ENCODE measurements at regions of chr16 and their contacts with region 1.

Region 1: GRCh38 chr16:14285513-14286385 is 214.6 kb downstream of the MRTFB start:
- DNase-seq: peak; percentile 95
- CTCF ChIP-seq: no peak

Region 2: DNA sequence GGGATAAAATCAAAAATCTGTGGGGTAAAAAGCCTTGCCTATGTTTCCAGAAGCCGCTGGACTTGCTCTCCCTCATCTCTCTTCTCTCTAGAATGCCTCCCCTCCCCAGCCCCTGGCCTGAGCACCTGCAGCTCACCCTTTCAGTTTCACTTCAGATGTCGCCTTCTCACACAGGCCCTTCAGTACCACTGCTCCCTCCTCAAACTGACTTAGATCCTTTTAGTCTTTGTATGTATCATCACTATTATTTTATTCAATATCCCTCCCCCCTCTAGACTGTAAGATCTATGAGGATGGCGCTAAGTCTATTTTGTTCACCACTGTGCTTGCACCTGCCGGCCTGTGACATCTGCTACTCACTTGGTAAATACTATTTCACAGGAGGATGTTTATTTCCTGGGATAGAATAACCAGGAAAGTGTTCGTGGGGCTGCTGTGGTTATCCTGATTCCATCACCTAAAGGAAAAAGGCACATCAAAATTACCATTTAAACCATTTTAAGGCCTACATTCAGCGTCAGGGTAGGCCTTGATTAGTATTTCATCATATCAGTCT is 92.4 kb before region 1 on chr16:
- CTCF ChIA-PET with region 1: no interaction called
- POLR2A ChIA-PET with region 1: no interaction called
- DNase-seq: peak; percentile 63
- CTCF ChIP-seq: no peak

Region 3: DNA sequence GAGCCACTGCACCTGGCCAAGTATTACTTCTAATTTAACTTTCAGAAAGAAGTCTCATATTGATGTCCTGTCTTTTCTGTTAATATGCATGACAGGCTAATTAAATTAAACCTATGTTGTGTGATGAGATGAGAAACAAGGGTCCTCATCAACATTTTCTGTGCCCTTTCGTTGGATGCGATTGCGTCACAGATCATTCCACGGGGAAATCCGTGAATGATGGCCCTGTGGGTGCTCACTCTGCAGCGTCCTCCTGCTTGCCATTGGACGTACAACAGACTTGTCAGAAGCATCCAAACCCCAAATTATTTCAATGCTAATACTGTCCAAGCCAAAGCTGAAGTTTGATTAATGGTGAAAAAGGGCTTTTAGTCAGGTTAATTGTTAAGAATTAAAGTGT is 17.7 kb before region 1 on chr16:
- CTCF ChIA-PET with region 1: no interaction called
- POLR2A ChIA-PET with region 1: no interaction called
- DNase-seq: no peak
- CTCF ChIP-seq: no peak

Region 4: DNA sequence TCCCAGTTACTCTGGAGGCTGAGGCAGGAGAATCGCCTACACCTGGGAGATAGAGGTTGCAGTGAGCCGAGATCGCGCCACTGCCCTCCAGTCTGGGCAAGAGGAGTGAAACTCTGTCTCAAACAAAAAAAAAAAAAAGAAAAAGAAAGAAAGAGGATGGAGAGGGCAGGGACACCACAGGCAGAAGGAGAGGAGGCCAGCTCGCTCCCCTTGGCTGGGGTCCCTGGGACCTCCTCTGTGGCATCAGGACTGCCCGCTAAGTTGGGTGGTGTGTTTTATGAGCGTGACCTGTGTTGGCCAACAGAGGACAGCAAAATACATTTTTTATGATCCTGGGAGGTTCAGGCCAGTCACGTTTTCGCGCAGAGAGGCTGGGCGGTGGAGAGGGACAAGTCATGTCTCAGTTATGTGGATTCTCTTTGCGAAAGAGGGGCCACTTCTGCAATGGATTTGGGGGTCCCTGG is 15.0 kb after region 1 on chr16:
- CTCF ChIA-PET with region 1: interaction called, 18 read pairs
- POLR2A ChIA-PET with region 1: interaction called, 3 read pairs
- DNase-seq: peak; percentile 75
- CTCF ChIP-seq: peak; percentile 87

Region 5: GRCh38 chr16:14310519-14310991 is 24.8 kb after region 1 on chr16:
- CTCF ChIA-PET with region 1: interaction called, 18 read pairs
- POLR2A ChIA-PET with region 1: interaction called, 6 read pairs
- DNase-seq: peak; percentile 70
- CTCF ChIP-seq: peak; percentile 17

Region 6: DNA sequence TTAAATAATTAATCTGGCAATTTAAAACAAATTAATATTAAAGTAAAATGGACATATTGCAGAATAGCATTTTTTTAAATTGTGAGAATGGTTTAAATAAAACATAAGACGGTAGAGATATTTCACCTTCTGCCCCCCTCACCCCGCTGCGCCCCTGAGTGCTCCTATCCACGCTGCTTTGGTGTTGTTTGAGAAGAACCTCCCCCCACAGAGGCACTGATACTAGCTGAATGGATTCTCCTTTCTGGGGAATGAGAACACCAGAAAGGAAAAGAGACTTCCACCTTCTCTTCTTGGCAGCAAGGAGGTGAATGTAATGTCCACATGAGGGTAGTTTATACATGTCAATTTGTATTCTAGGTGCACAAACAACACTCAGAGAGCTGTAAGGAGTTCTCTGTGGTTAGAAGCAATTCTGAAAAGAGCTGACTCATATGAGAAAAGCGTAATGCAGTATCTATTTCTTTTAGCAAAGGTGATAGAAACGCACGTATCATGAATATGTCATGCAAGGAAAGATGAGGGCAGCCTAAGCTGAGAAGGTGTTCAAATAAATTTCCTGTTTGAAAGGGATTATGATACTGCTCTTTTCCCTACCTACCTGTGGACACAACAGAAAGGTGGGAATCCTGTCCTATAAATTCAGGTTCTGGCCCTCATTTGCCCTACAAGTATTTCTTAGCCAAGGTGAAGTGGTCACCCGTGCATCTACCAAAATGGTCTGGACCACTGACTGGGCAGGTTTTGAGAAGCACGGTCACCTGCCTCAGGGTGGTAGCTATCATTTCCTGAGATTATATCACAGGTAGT is 217.4 kb after region 1 on chr16:
- CTCF ChIA-PET with region 1: no interaction called
- POLR2A ChIA-PET with region 1: interaction called, 11 read pairs
- DNase-seq: peak; percentile 59
- CTCF ChIP-seq: no peak

Measured in GM10248 (cell line).